ENCODE measurements at regions of chr14 and their contacts with region 1.

Region 1: GRCh38 chr14:106844608-106845285 is 1318.4 kb downstream of the TMEM121 start:
- DNase-seq: peak; percentile 87 to 94 (median 93)
- H3K4me3 ChIP-seq: peak overlapping the region; percentile 70 to 96 (median 88)
- H3K27ac ChIP-seq: peak overlapping the region; percentile 92 to 97
- H3K4me1 ChIP-seq: peaks cover 25 to 93% (median 72%) of the 10 kb centered on the region in 4 experiments
- H3K27me3 ChIP-seq: no peaks in the 10 kb centered on the region

Region 2: GRCh38 chr14:106491851-106492250 is 352.9 kb before region 1 on chr14:
- CTCF ChIA-PET with region 1: no interaction called
- POLR2A ChIA-PET with region 1: no interaction called
- DNase-seq: peak in 1 of 3 donors; percentile 5
- H3K4me3 ChIP-seq: no peak overlapping the region
- H3K27ac ChIP-seq: no peak overlapping the region
- H3K4me1 ChIP-seq: peaks cover 2 to 12% (median 6%) of the 10 kb centered on the region in 4 experiments
- H3K27me3 ChIP-seq: peaks cover 0 to 5% (median 0%) of the 10 kb centered on the region in 5 experiments

Region 3: DNA sequence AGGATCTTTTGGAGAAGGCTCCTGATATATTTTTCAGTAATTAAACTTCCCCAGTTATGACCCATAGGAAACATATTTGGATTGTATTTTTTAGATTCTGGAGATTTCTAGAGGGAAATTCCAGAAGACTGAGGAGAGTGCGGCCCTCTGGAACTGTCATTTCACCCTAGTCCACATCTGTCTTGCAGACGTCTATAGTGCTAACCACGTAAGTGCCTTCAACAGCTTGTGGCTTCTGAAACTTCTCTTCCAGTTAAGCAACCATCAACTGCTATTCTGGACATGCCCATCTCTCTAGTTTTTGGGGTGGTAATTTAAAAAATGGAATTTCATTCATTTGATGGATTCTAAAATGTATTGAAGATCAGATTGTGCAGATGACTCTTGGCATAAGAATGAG is 219.6 kb before region 1 on chr14:
- CTCF ChIA-PET with region 1: no interaction called
- POLR2A ChIA-PET with region 1: no interaction called
- DNase-seq: peak in 2 of 3 donors; percentile 70 to 76
- H3K4me3 ChIP-seq: no peak overlapping the region
- H3K27ac ChIP-seq: no peak overlapping the region
- H3K4me1 ChIP-seq: peaks cover 0 to 32% (median 25%) of the 10 kb centered on the region in 4 experiments
- H3K27me3 ChIP-seq: no peaks in the 10 kb centered on the region

Region 4: GRCh38 chr14:106737021-106737420 is 107.7 kb before region 1 on chr14:
- CTCF ChIA-PET with region 1: no interaction called
- POLR2A ChIA-PET with region 1: no interaction called
- DNase-seq: no peak
- H3K4me3 ChIP-seq: peak overlapping the region in 1 of 7 experiments; percentile 43
- H3K27ac ChIP-seq: no peak overlapping the region
- H3K4me1 ChIP-seq: peaks cover 0 to 3% (median 0%) of the 10 kb centered on the region in 4 experiments
- H3K27me3 ChIP-seq: no peaks in the 10 kb centered on the region

Region 5: DNA sequence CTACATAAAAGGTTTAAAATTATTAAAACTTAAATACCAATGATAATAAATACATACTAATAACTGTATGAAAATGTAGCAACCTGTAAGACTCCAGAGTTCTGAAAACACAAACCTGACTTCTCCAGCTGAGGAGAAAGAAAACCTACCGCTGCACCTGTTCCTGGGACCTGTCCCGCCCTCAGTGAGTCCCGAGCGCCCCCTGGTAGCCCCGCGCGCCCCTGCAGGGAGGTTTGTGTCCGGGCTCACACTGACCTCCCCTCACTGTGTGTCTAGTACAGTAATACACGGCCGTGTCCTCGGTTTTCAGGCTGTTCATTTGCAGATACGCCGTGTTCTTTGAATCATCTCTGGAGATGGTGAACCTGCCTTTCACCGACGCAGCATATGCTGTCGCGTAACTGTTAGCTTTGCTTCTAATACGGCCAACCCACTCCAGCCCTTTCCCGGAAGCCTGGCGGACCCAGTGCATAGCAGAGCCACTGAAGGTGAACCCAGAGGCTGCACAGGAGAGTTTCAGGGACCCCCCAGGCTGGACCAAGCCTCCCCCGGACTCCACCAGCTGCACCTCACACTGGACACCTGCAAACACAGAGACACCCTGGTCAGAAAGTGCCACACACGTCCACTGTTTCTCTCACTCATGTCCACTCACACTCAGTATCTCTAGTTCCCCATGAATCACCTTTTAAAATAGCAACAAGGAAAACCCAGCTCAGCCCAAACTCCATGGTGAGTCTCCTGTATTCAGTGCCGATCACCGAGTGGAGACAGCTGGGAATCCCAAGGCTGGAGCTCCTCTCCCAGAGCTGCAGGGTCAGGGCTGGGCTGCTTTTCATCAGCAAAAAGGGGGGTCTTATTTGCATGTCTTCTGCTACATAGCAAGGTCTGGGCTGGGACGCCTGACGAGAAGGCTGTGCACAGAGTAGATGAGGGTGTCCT is 42.1 kb before region 1 on chr14:
- CTCF ChIA-PET with region 1: interaction called, 16 read pairs
- POLR2A ChIA-PET with region 1: no interaction called
- DNase-seq: peak; percentile 15 to 36 (median 25)
- H3K4me3 ChIP-seq: peak overlapping the region in 2 of 7 experiments; percentile 28 to 43
- H3K27ac ChIP-seq: no peak overlapping the region
- H3K4me1 ChIP-seq: no peaks in the 10 kb centered on the region
- H3K27me3 ChIP-seq: peaks cover 0 to 2% (median 0%) of the 10 kb centered on the region in 5 experiments

Region 6: GRCh38 chr14:106823552-106823951 is 21.2 kb before region 1 on chr14:
- CTCF ChIA-PET with region 1: interaction called, 111 read pairs
- POLR2A ChIA-PET with region 1: no interaction called
- DNase-seq: no peak
- H3K4me3 ChIP-seq: no peak overlapping the region
- H3K27ac ChIP-seq: no peak overlapping the region
- H3K4me1 ChIP-seq: peaks cover 0 to 24% (median 9%) of the 10 kb centered on the region in 4 experiments
- H3K27me3 ChIP-seq: no peaks in the 10 kb centered on the region

Region 7: DNA sequence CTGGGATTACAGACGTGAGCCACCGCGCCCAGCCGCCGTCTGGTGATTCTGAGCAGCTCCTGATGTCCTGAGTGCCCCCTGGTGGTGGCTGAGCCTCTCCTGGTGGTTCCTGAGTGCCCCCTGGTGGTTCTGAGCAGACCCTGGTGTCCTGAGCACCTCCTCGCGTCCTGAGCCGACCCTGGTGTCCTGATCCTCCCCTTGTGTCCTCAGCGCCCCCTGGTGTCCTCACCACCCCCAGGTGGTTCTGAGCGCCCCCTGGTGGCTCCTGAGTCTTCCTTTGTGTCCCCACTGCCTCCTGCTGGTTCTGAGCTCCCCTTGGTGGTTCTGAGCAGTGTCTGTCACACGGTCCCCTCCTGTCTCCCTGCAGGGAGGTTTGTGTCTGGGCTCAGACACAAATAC is 13.4 kb before region 1 on chr14:
- CTCF ChIA-PET with region 1: interaction called, 111 read pairs
- POLR2A ChIA-PET with region 1: no interaction called
- DNase-seq: peak; percentile 76 to 83 (median 82)
- H3K4me3 ChIP-seq: no peak overlapping the region
- H3K27ac ChIP-seq: no peak overlapping the region
- H3K4me1 ChIP-seq: peaks cover 0 to 3% (median under 1%) of the 10 kb centered on the region in 4 experiments
- H3K27me3 ChIP-seq: no peaks in the 10 kb centered on the region